Gastrocnemius medialis (tissue), 4 donors: ENCODE measurements at regions of chr2 and their contacts with region 1.

Region 1: GRCh38 chr2:33033606-33034081 is 86.9 kb downstream of the LTBP1 start:
- DNase-seq: no peak
- ATAC-seq: peak; percentile 53 to 86
- H3K4me3 ChIP-seq: peak overlapping the region; percentile 20 to 47 (median 35)
- H3K27ac ChIP-seq: no peak overlapping the region
- H3K4me1 ChIP-seq: peaks cover 2 to 4% of the 10 kb centered on the region in 2 donors
- H3K27me3 ChIP-seq: no peaks in the 10 kb centered on the region
- CTCF ChIP-seq: peak; percentile 36 to 59 (median 44)
- POLR2A ChIP-seq: no peak

Region 2: GRCh38 chr2:32772638-32773447 is 260.8 kb before region 1 on chr2:
- in situ Hi-C with region 1: loop called in 2 of 4 experiments (anchors 5 to 10 kb)
- intact Hi-C with region 1: loop called (anchors 1 kb)
- DNase-seq: no peak
- ATAC-seq: peak in 1 of 2 donors; percentile 47
- H3K4me3 ChIP-seq: no peak overlapping the region
- H3K27ac ChIP-seq: no peak overlapping the region
- H3K4me1 ChIP-seq: no peaks in the 10 kb centered on the region
- H3K27me3 ChIP-seq: no peaks in the 10 kb centered on the region
- CTCF ChIP-seq: peak; percentile 48 to 65 (median 60)
- POLR2A ChIP-seq: no peak

Region 3: GRCh38 chr2:32904751-32905150 is 128.9 kb before region 1 on chr2:
- in situ Hi-C with region 1: no loop called
- intact Hi-C with region 1: no loop called
- DNase-seq: no peak
- ATAC-seq: no peak
- H3K4me3 ChIP-seq: no peak overlapping the region
- H3K27ac ChIP-seq: no peak overlapping the region
- H3K4me1 ChIP-seq: no peaks in the 10 kb centered on the region
- H3K27me3 ChIP-seq: no peaks in the 10 kb centered on the region
- CTCF ChIP-seq: no peak
- POLR2A ChIP-seq: no peak

Region 4: DNA sequence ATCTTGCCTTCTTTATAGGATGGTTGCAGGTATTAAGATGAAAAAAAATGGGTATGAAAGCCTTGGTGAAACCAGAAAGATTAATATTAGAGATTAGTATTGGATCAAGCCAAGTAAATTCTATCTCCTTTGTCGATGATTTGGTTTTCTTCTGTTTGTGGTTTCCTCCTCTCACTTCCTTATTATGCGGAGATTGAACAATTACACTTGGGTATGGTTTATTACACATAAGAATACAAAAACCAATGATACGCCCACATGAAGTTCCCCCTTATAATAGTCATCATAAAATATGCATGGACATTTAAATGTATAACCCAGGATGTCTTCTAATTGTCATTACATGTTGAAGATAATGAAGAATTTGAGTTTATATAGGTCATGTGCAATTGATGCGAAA is 82.0 kb before region 1 on chr2:
- in situ Hi-C with region 1: loop called in 2 of 4 experiments (anchors 5 to 10 kb)
- intact Hi-C with region 1: loop called (anchors 1 kb)
- DNase-seq: no peak
- ATAC-seq: no peak
- H3K4me3 ChIP-seq: no peak overlapping the region
- H3K27ac ChIP-seq: no peak overlapping the region
- H3K4me1 ChIP-seq: no peaks in the 10 kb centered on the region
- H3K27me3 ChIP-seq: no peaks in the 10 kb centered on the region
- CTCF ChIP-seq: no peak
- POLR2A ChIP-seq: no peak

Region 5: GRCh38 chr2:33068261-33068660 is 34.6 kb after region 1 on chr2:
- in situ Hi-C with region 1: no loop called
- intact Hi-C with region 1: no loop called
- DNase-seq: no peak
- ATAC-seq: no peak
- H3K4me3 ChIP-seq: no peak overlapping the region
- H3K27ac ChIP-seq: peak overlapping the region in 1 of 4 donors; percentile 82
- H3K4me1 ChIP-seq: peaks cover 22 to 28% of the 10 kb centered on the region in 2 donors
- H3K27me3 ChIP-seq: no peaks in the 10 kb centered on the region
- CTCF ChIP-seq: no peak
- POLR2A ChIP-seq: no peak

Region 6: DNA sequence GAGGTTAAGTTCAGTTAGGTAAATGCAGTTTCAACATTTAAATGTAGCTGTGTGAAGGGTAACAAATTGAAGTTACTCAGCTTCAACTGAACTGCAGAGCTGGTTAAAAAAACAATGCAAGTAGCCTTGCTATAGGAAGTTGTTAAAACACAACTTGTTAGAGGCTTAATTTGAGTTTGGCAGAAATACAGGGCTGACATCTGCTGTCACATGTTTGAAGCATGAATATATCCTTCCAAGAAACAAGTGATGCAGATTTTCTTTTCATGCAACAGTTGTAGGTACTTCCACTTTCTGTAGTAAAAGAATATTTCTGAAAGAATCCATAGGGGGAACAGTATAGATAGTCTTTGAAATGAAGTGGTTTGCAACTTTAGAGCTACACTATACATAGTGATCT is 234.1 kb after region 1 on chr2:
- in situ Hi-C with region 1: loop called in 2 of 4 experiments (anchors 10 kb)
- intact Hi-C with region 1: loop called (anchors 2 kb)
- DNase-seq: no peak
- ATAC-seq: no peak
- H3K4me3 ChIP-seq: no peak overlapping the region
- H3K27ac ChIP-seq: no peak overlapping the region
- H3K4me1 ChIP-seq: peaks cover 0 to 4% of the 10 kb centered on the region in 2 donors
- H3K27me3 ChIP-seq: no peaks in the 10 kb centered on the region
- CTCF ChIP-seq: no peak
- POLR2A ChIP-seq: no peak

Region 7: DNA sequence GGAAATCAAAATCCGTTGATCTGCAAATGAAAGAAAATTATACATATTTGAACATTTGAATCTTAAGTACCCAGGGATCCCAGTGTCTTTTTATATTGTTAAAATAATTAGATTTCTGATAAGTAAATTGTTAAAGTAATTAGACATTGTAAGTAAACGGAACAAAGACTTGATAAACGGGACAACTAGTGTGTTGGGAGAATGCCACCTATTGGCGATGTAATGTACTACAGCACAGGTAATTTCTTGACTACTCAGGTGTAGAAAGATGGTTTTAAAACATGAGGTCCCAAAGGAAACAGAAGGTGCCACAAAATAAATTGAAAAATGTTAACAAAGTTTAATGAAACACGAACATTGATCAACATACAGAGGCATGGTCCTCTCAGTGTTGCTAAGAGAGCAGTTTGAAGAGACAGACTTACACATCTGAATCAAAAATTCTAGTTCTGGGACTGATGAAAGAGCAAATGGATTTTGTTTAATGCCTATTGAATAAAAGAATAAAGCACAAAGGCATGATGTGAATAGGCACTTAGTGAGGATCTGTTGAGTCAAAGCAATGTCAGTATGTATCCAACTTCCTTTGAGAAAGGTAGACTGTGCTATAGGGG is 339.4 kb after region 1 on chr2:
- in situ Hi-C with region 1: loop called in 3 of 4 experiments (anchors 10 kb)
- intact Hi-C with region 1: no loop called
- DNase-seq: no peak
- ATAC-seq: no peak
- H3K4me3 ChIP-seq: no peak overlapping the region
- H3K27ac ChIP-seq: no peak overlapping the region
- H3K4me1 ChIP-seq: no peaks in the 10 kb centered on the region
- H3K27me3 ChIP-seq: no peaks in the 10 kb centered on the region
- CTCF ChIP-seq: peak; percentile 48 to 73 (median 61)
- POLR2A ChIP-seq: no peak

Region 8: DNA sequence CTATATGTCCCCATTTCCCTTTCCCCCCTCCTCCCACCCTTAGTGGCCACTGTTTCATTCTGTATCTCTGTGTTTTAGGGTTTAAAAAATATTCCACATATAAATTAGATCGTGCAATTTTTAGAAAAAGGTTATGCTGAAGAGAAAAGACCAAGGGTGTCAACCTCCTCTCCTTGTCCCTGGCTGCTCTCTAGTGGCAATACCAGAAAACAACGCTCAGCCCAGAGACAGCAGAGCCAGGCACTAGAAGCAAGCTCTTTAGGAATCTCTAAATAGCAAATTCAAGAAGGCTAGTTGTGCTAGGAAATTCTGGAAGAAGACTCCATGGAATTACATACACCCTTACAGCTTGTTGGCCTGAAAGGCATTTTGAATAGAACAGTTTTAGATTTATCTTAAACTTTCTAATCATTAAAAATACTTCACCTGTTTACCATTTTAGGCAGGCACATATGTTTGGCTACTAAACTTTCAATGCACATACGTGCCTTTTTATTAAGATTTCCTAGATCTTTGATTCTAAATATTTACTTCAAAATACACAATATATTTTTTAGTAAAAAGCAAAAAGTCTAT is 407.7 kb after region 1 on chr2:
- in situ Hi-C with region 1: no loop called
- intact Hi-C with region 1: loop called (anchors 10 kb)
- DNase-seq: peak; percentile 44 to 45
- ATAC-seq: peak; percentile 58 to 65
- H3K4me3 ChIP-seq: no peak overlapping the region
- H3K27ac ChIP-seq: peak overlapping the region in 3 of 4 donors; percentile 66 to 82 (median 78)
- H3K4me1 ChIP-seq: peaks cover 22 to 46% of the 10 kb centered on the region in 2 donors
- H3K27me3 ChIP-seq: no peaks in the 10 kb centered on the region
- CTCF ChIP-seq: peak; percentile 27 to 73 (median 46)
- POLR2A ChIP-seq: no peak

Region 9: GRCh38 chr2:33599175-33599942 is 565.7 kb after region 1 on chr2 and contains the start of gene FAM98A:
- in situ Hi-C with region 1: loop called in 3 of 4 experiments (anchors 25 kb)
- intact Hi-C with region 1: no loop called
- DNase-seq: peak; percentile 99
- ATAC-seq: peak; percentile 93 to 95
- H3K4me3 ChIP-seq: peak within 1 kb of the TSS; percentile 89 to 99 (median 96)
- H3K27ac ChIP-seq: peak within 1 kb of the TSS; percentile 95 to 98 (median 96)
- H3K4me1 ChIP-seq: peaks cover 15 to 28% of the 10 kb centered on the region in 2 donors
- H3K27me3 ChIP-seq: no peaks in the 10 kb centered on the region
- CTCF ChIP-seq: peak in 2 of 5 experiments; percentile 9 to 35
- POLR2A ChIP-seq: peak; percentile 73 to 78
- total RNA-seq, gene FAM98A: 33.7 to 1,115 (median 44.2) TPM